K562 (cell line): ENCODE measurements at regions of chr3 and their contacts with region 1.

Region 1: GRCh38 chr3:167469381-167469780 is 4.5 kb downstream of the SERPINI2 start:
- DNase-seq: no peak
- ATAC-seq: no peak
- H3K4me3 ChIP-seq: no peak overlapping the region
- H3K27ac ChIP-seq: no peak overlapping the region
- H3K4me1 ChIP-seq: no peaks in the 10 kb centered on the region
- H3K27me3 ChIP-seq: no peaks in the 10 kb centered on the region
- CTCF ChIP-seq: no peak
- EP300 ChIP-seq: no peak
- POLR2A ChIP-seq: no peak
- RAD21 ChIP-seq: no peak

Region 2: GRCh38 chr3:167453815-167454214 is 15.6 kb before region 1 on chr3:
- CTCF ChIA-PET with region 1: no interaction called
- POLR2A ChIA-PET with region 1: no interaction called
- in situ Hi-C with region 1: no loop called
- intact Hi-C with region 1: loop called (anchors 1 kb)
- DNase-seq: no peak
- ATAC-seq: no peak
- H3K4me3 ChIP-seq: no peak overlapping the region
- H3K27ac ChIP-seq: no peak overlapping the region
- H3K4me1 ChIP-seq: no peaks in the 10 kb centered on the region
- H3K27me3 ChIP-seq: no peaks in the 10 kb centered on the region
- CTCF ChIP-seq: no peak
- EP300 ChIP-seq: no peak
- POLR2A ChIP-seq: no peak
- RAD21 ChIP-seq: no peak

Region 3: DNA sequence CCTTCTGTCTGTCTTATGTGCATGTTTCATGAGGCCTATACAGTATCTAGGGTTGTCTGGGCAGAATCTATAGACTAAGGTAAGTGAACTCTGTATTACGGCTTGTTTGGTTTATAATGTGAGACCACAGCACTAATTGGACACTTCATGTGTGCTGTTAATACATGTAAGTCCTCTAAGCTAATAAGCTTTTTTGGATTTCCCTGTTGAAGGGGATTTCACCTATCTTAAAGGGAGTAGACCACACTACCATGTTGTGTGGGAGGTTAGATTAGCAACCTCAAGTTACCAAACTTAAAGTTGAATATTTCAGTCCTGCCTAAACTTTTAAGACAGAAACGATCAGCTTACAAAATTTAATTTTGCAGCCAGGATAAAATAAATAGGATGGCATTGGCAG is 816.1 kb after region 1 on chr3:
- CTCF ChIA-PET with region 1: no interaction called
- POLR2A ChIA-PET with region 1: no interaction called
- in situ Hi-C with region 1: no loop called
- intact Hi-C with region 1: no loop called
- DNase-seq: no peak
- ATAC-seq: no peak
- H3K4me3 ChIP-seq: no peak overlapping the region
- H3K27ac ChIP-seq: no peak overlapping the region
- H3K4me1 ChIP-seq: no peaks in the 10 kb centered on the region
- H3K27me3 ChIP-seq: no peaks in the 10 kb centered on the region
- CTCF ChIP-seq: no peak
- EP300 ChIP-seq: no peak
- POLR2A ChIP-seq: no peak
- RAD21 ChIP-seq: no peak